ENCODE measurements at regions of chr10 and their contacts with region 1.

Region 1: GRCh38 chr10:72229261-72230251 is 13.5 kb upstream of the ASCC1 start:
- DNase-seq: no peak
- ATAC-seq: no peak
- H3K4me3 ChIP-seq: no peak overlapping the region
- H3K27ac ChIP-seq: no peak overlapping the region
- H3K4me1 ChIP-seq: no peaks in the 10 kb centered on the region
- H3K27me3 ChIP-seq: no peaks in the 10 kb centered on the region
- CTCF ChIP-seq: no peak
- EP300 ChIP-seq: no peak
- POLR2A ChIP-seq: no peak
- RAD21 ChIP-seq: no peak

Region 2: GRCh38 chr10:72146071-72146470 is 83.5 kb before region 1 on chr10:
- CTCF ChIA-PET with region 1: no interaction called
- POLR2A ChIA-PET with region 1: no interaction called
- in situ Hi-C with region 1: no loop called
- intact Hi-C with region 1: no loop called
- DNase-seq: no peak
- ATAC-seq: peak; percentile 44; the same call in 2 of the 3 replicates
- H3K4me3 ChIP-seq: no peak overlapping the region
- H3K27ac ChIP-seq: no peak overlapping the region
- H3K4me1 ChIP-seq: peaks cover 0 to 6% of the 10 kb centered on the region in 2 experiments; a peak in 2 of 5 replicates
- H3K27me3 ChIP-seq: no peaks in the 10 kb centered on the region
- CTCF ChIP-seq: no peak
- EP300 ChIP-seq: no peak
- POLR2A ChIP-seq: no peak
- RAD21 ChIP-seq: no peak

Region 3: GRCh38 chr10:72215652-72216549 is 13.7 kb before region 1 on chr10 and contains the starts of genes ANAPC16 and ASCC1:
- CTCF ChIA-PET with region 1: no interaction called
- POLR2A ChIA-PET with region 1: interaction called, 15 read pairs
- in situ Hi-C with region 1: no loop called
- intact Hi-C with region 1: no loop called
- DNase-seq: peak; percentile 93 to 98 (median 97)
- ATAC-seq: peak; percentile 90
- H3K4me3 ChIP-seq: peak within 1 kb of the TSS; percentile 65
- H3K27ac ChIP-seq: peak within 1 kb of the TSS; percentile 99
- H3K4me1 ChIP-seq: peaks cover 13 to 19% of the 10 kb centered on the region in 2 experiments; a peak in 4 of 5 replicates
- H3K27me3 ChIP-seq: no peaks in the 10 kb centered on the region
- CTCF ChIP-seq: 0 out of 6 replicates have a peak, but pooled peaks of 1 of the 3 experiments have one; percentile 1
- EP300 ChIP-seq: peak; percentile 22; the same call in 1 of the 2 replicates
- POLR2A ChIP-seq: peak; percentile 100
- RAD21 ChIP-seq: peak; percentile 10 to 34; a peak in 1 of 4 replicates
- polyA plus RNA-seq, gene ANAPC16: 184 to 208 TPM
- polyA plus RNA-seq, gene ASCC1: 50.8 to 73.3 TPM

Measured in K562 (cell line).